PC-9 (cell line): ENCODE measurements at regions of chr2 and their contacts with region 1.

Region 1: GRCh38 chr2:119290859-119291587 is 67.4 kb downstream of the STEAP3 start:
- DNase-seq: peak; percentile 70 to 85
- H3K4me3 ChIP-seq: no peak overlapping the region
- H3K27ac ChIP-seq: no peak overlapping the region
- H3K4me1 ChIP-seq: peaks cover 5% of the 10 kb centered on the region
- H3K27me3 ChIP-seq: no peaks in the 10 kb centered on the region
- CTCF ChIP-seq: peak; percentile 99

Region 2: GRCh38 chr2:118882709-118883210 is 408.3 kb before region 1 on chr2:
- CTCF ChIA-PET with region 1: interaction called, 3 read pairs
- POLR2A ChIA-PET with region 1: no interaction called
- intact Hi-C with region 1: loop called (anchors 1 kb)
- DNase-seq: peak; percentile 51 to 75
- H3K4me3 ChIP-seq: no peak overlapping the region
- H3K27ac ChIP-seq: no peak overlapping the region
- H3K4me1 ChIP-seq: peaks cover 40% of the 10 kb centered on the region
- H3K27me3 ChIP-seq: no peaks in the 10 kb centered on the region
- CTCF ChIP-seq: peak; percentile 99

Region 3: DNA sequence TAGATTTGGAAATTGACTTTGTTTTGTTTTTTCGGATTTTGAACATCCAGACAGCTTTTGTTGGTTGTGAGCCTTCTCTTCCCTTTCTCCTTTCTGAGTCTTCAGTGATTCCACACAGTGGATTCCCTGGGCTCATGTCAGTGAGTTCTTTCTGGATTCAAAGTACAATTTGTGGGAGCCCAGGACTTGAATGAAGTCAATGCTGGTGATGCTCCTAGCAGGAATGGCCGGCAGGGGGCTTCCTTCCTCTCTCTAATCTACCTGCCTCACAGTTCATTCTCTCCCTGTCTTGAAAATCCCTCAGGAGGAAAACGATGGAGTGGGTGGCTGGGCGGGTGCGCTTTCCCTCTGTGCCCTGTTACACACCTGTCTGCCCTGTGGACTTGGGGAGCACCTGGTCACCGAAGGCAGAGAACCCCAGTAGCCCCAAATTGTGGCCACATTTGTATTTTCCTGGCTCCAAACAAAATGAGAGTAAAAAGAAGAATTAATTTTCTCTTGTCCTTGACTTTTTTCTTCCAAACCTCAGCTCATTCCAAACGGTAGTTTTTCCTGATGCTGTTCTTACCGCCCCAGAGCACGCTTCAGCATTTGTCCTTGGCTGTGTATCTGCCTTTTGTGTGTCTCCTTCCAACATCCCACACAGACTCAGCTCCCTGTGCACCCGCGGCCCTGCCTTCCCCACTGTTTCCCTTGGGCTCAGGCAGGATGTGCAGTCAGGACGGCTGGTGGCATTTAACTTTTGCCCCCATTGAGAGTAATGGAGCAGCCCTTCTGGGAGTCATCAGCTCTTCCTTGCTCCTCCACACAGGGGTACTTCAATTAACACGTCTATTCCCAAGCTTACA is 262.5 kb before region 1 on chr2:
- CTCF ChIA-PET with region 1: interaction called, 3 read pairs
- POLR2A ChIA-PET with region 1: no interaction called
- intact Hi-C with region 1: loop called (anchors 1 kb)
- DNase-seq: peak in 1 of 2 experiments; percentile 47
- H3K4me3 ChIP-seq: no peak overlapping the region
- H3K27ac ChIP-seq: no peak overlapping the region
- H3K4me1 ChIP-seq: no peaks in the 10 kb centered on the region
- H3K27me3 ChIP-seq: no peaks in the 10 kb centered on the region
- CTCF ChIP-seq: peak; percentile 86

Region 4: DNA sequence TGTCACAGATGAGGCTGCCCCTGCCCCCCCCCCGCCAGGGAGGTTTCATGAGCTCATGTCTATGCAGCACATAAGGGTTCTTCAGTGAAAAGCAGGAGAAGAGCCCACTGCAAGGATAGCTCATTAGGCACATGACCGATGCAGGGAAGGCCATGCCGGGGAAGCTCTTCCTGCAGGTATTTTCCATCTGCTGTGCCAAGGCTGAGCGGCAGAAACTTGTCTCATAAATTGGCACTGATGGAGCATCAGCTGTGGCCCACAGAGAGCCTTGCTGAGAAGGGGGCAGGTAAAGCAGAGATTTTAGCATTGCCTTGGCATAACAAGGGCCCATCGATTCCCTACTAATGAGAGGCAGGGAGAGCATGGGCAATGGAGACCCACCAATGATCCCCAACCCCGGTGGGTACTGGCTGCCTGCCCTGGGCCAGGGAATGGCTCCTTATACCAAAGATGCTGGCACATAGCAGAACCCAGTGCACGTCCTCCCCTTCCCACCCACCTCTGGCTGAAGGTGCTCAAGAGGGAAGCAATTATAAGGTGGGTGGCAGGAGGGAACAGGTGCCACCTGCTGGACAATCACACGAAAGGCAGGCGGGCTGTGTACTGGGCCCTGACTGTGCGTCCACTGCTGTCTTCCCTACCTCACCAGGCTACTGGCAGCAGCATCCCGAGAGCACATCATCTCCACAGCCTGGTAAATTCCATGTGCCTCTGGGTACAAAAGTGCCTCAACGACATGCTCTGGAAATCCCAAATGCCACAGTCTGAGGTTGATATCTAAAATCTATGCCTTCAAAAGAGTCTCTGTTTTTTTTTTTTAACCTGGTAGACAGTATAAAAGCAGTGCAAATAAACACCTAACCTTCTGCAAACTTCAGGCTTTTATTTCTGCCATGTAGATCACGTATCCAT is 26.0 kb before region 1 on chr2:
- CTCF ChIA-PET with region 1: no interaction called
- POLR2A ChIA-PET with region 1: no interaction called
- intact Hi-C with region 1: loop called (anchors 2 kb)
- DNase-seq: peak in 1 of 2 experiments; percentile 67
- H3K4me3 ChIP-seq: no peak overlapping the region
- H3K27ac ChIP-seq: no peak overlapping the region
- H3K4me1 ChIP-seq: no peaks in the 10 kb centered on the region
- H3K27me3 ChIP-seq: no peaks in the 10 kb centered on the region
- CTCF ChIP-seq: peak; percentile 95

Region 5: DNA sequence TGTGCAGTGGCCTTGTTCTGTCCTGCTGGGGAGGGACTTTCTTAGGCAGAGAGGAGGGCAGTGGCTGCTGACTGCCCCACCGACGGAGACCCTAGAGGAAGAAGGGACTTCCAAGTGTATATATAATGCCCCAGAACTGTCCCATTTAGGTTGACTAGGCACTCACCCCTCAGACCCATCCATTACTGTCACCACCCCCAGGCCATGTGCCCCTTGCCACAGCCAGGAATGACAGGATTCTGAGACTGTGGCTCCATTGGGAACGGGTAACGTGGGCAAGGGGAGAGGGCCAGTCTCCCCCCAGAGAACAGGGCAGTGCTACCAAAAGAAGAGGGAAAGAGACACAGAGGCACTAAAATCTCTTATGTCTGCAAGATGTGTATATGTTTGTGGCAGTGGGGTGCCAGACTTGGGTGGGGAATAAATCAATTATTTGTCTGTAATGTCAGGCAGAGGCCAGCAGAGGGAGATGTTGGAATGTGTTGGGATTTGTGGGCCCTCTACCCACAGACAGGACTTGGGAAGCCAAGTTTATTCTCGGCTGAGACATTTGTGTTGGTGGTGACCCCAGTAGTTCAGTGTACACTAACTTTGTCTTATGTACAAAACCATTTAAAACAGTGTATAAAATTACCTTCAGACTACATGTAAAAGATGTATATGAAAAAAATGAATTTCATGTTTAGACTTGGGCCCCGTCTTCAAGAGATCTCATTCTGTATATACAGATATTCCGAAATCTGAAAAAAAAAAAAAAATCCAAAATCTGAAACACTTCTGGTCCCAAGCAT is 116.6 kb after region 1 on chr2:
- CTCF ChIA-PET with region 1: no interaction called
- POLR2A ChIA-PET with region 1: no interaction called
- intact Hi-C with region 1: loop called (anchors 5 kb)
- DNase-seq: peak; percentile 44 to 57
- H3K4me3 ChIP-seq: no peak overlapping the region
- H3K27ac ChIP-seq: no peak overlapping the region
- H3K4me1 ChIP-seq: peaks cover 5% of the 10 kb centered on the region; the same call in 1 of the 2 replicates
- H3K27me3 ChIP-seq: no peaks in the 10 kb centered on the region
- CTCF ChIP-seq: peak; percentile 98

Region 6: DNA sequence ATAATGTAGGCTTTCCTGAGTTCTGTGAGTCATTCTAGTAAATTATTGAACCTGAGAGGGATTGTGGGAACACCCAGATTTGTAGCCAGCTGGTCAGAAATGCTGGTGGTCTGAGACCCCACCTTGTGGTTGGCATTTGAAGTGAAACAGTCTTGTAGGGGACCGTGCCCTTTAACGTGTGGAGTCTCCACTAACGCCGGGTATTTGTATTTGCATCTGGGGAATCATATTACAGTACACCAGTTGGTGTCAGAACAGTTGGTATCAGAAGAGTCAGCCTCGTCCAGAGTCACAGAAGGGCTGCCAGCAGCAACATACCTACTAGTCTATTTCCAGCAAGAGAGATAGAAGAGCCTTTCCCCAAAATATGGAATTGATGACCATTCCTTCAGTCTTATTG is 430.4 kb after region 1 on chr2:
- CTCF ChIA-PET with region 1: no interaction called
- POLR2A ChIA-PET with region 1: no interaction called
- intact Hi-C with region 1: no loop called
- DNase-seq: peak in 1 of 2 experiments; percentile 16
- H3K4me3 ChIP-seq: no peak overlapping the region
- H3K27ac ChIP-seq: no peak overlapping the region
- H3K4me1 ChIP-seq: peaks cover 4% of the 10 kb centered on the region; the same call in 1 of the 2 replicates
- H3K27me3 ChIP-seq: peaks cover 2% of the 10 kb centered on the region; the same call in 1 of the 2 replicates
- CTCF ChIP-seq: no peak